PC-9 (cell line): ENCODE measurements at regions of chr12 and their contacts with region 1.

Region 1: DNA sequence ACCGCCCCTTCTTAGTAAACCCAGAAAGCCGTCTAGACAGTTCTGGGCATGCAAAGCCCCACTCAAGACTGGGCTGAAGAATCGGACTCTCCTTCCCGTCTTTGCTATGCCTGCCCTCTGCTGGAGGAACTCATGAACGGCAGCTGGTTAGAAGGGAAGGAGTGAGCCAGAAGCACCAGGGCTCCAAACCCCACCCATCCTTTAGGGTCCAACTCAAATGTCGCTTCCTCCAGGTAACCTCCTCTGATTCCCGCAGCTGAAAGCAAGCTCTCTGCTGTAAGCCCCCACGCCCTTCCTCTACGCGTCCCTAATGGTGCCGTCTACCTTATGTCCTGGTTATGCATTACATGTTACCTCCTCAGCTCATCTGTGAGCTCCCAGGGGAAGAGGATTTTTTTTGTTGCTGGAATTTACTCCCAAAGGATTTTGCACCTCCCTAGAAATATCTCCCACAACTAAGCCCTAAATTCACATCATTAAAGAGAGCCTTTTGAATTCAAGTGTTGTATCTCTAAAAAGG is 59.0 kb upstream of the SCN8A start:
- DNase-seq: peak in 1 of 2 experiments; percentile 73
- H3K4me3 ChIP-seq: no peak overlapping the region
- H3K27ac ChIP-seq: no peak overlapping the region
- H3K4me1 ChIP-seq: no peaks in the 10 kb centered on the region
- H3K27me3 ChIP-seq: peaks cover 14% of the 10 kb centered on the region
- CTCF ChIP-seq: peak; percentile 87

Region 2: DNA sequence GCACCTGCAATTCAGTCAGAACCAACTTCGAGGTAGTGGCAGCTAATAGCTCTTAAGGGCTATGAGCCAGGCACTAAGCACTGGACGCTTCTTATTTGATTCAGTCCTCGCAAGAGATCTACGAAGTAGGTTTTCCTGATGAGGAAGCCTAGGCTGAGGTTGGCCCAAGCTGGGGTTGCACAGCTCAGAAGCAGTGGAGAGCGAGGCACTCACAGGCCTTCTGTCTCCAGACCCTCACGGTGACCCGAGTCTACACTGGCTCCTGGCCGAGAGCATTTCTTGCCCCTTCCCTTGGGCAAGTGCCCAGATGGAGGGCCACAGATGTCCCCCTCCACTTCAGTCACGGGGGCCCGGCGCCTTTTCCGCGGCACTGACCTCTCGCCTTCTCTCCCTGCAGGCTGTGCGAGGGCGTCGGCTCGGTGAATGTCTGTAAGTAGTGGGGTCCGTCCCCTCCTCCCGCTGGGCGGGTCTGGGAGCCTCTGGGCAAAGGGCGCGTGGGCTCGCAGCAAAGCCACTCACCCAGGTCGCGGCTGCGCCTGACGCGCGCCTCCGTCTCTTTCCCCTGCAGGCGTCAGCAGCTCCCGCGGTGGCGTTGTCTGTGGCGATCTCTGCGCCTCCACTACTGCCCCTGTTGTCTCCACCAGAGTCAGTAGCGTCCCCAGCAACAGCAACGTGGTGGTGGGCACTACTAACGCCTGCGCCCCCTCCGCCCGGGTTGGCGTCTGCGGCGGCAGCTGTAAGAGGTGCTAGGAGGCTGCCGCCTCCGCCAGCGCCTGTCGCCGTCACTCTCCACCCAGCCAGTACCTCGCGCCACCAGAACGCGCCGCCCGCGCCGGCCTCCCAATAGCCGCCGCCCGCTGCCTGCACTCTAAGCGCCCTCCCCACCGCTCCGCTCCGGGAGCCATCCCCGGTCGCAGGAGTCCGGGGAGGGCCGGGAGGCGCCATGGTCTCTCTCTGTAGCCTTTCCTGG is 776.1 kb after region 1 on chr12:
- CTCF ChIA-PET with region 1: interaction called, 10 read pairs
- POLR2A ChIA-PET with region 1: no interaction called
- intact Hi-C with region 1: no loop called
- DNase-seq: peak; percentile 49 to 75
- H3K4me3 ChIP-seq: peak overlapping the region; percentile 71
- H3K27ac ChIP-seq: no peak overlapping the region
- H3K4me1 ChIP-seq: peaks cover 19% of the 10 kb centered on the region
- H3K27me3 ChIP-seq: no peaks in the 10 kb centered on the region
- CTCF ChIP-seq: no peak